SK-N-SH (cell line): ENCODE measurements at regions of chr14 and their contacts with region 1.

Region 1: GRCh38 chr14:81170104-81170828 is 50.5 kb downstream of the GTF2A1 start:
- DNase-seq: peak; percentile 83
- H3K4me3 ChIP-seq: peak overlapping the region; percentile 79 to 84
- H3K27ac ChIP-seq: peak overlapping the region; percentile 94 to 99
- H3K4me1 ChIP-seq: peaks cover 3 to 5% of the 10 kb centered on the region in 2 experiments; a peak in 2 of 4 replicates
- H3K27me3 ChIP-seq: no peaks in the 10 kb centered on the region
- CTCF ChIP-seq: peak; percentile 88
- EP300 ChIP-seq: no peak; a peak in 1 of 4 replicates
- RAD21 ChIP-seq: peak; percentile 73

Region 2: DNA sequence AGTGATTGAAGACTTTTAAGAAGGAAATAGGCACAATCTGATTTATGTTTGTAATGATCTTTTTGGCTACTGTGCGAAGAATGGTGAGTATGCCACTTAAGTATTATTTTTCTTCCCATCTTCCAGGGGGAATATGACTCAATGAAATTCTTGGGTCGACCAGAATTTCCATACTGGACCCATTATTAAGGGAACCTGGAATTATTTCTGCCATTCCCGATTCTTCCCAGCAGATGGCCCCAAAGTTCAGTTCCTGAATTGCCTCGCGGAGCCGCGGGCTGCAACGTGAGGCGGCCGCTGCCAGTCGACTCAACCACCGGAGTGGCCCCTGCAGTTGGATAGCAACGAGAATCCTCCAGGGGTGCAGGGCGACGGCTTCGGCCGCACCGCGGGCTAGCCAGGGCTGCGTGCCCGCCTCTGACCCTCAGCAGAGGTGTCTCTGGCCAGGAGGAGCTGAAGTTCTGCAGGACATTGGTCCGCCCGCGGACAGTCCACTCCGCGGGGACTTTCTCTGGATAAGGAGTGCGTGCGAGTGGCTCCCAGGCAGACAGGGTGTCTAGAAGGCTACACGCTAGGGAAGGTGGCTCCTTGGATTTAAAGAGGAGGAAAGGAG is 215.5 kb before region 1 on chr14:
- CTCF ChIA-PET with region 1: interaction called, 14 read pairs
- POLR2A ChIA-PET with region 1: no interaction called
- DNase-seq: peak; percentile 81
- H3K4me3 ChIP-seq: peak overlapping the region; percentile 54 to 70
- H3K27ac ChIP-seq: no peak overlapping the region
- H3K4me1 ChIP-seq: peaks cover 0 to 2% of the 10 kb centered on the region in 2 experiments; a peak in 1 of 4 replicates
- H3K27me3 ChIP-seq: peaks cover 25% of the 10 kb centered on the region
- CTCF ChIP-seq: peak; percentile 77
- EP300 ChIP-seq: peak in 1 of 2 experiments; percentile 34; a peak in 1 of 4 replicates
- RAD21 ChIP-seq: peak; percentile 85

Region 3: DNA sequence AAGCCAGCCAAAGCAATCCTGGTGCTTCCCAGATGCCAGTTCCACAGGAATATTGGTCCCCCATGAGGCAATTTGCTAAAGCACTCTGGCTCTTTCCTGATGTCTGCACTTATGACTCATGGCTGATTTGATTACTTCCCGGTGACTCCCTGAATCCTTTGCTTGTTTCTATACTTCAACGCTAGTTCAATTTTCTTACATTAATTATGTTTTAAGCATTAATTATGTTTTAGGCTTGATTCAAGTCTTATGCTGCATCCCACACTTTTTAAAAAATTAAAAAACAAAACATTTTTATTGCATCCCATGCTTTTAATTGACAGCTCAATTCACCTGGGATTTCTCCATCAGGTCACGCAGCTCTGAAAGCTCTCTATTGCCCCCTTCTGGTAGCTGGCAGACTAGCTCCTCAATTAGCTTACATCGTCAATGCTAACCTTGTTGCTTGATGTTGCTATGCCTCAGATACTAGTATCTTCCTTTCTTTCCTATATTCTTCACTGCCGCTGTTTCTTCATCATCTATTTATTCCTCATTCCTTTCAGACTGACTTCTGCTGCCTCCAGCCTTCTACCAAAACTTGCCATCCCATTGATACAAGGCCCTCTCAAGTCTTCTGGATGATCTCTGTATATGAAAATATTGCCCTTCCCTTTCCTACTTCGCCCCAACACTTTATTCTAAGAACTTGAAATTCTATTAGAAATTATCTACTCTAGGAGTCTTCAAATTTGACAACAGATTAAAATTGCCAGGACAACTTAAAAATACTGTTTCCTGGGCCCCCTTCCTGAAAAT is 182.8 kb before region 1 on chr14:
- CTCF ChIA-PET with region 1: interaction called, 14 read pairs
- POLR2A ChIA-PET with region 1: no interaction called
- DNase-seq: peak; percentile 69
- H3K4me3 ChIP-seq: peak overlapping the region in 1 of 2 experiments; percentile 42; a peak in 1 of 4 replicates
- H3K27ac ChIP-seq: no peak overlapping the region
- H3K4me1 ChIP-seq: no peaks in the 10 kb centered on the region; a peak in 1 of 4 replicates
- H3K27me3 ChIP-seq: peaks cover 13% of the 10 kb centered on the region; the same call in 1 of the 2 replicates
- CTCF ChIP-seq: peak; percentile 97
- EP300 ChIP-seq: no peak
- RAD21 ChIP-seq: peak; percentile 85

Region 4: GRCh38 chr14:80996049-80996901 is 174.0 kb before region 1 on chr14:
- CTCF ChIA-PET with region 1: interaction called, 29 read pairs
- POLR2A ChIA-PET with region 1: interaction called, 5 read pairs
- DNase-seq: peak; percentile 50
- H3K4me3 ChIP-seq: peak overlapping the region in 1 of 2 experiments; percentile 36; a peak in 1 of 4 replicates
- H3K27ac ChIP-seq: no peak overlapping the region
- H3K4me1 ChIP-seq: no peaks in the 10 kb centered on the region
- H3K27me3 ChIP-seq: peaks cover 8% of the 10 kb centered on the region; the same call in 1 of the 2 replicates
- CTCF ChIP-seq: peak; percentile 80
- EP300 ChIP-seq: no peak
- RAD21 ChIP-seq: peak; percentile 65

Region 5: GRCh38 chr14:81147140-81147897 is 22.9 kb before region 1 on chr14:
- CTCF ChIA-PET with region 1: interaction called, 11 read pairs
- POLR2A ChIA-PET with region 1: no interaction called
- DNase-seq: no peak
- H3K4me3 ChIP-seq: no peak overlapping the region
- H3K27ac ChIP-seq: no peak overlapping the region
- H3K4me1 ChIP-seq: no peaks in the 10 kb centered on the region
- H3K27me3 ChIP-seq: no peaks in the 10 kb centered on the region
- CTCF ChIP-seq: no peak
- EP300 ChIP-seq: no peak
- RAD21 ChIP-seq: no peak

Region 6: DNA sequence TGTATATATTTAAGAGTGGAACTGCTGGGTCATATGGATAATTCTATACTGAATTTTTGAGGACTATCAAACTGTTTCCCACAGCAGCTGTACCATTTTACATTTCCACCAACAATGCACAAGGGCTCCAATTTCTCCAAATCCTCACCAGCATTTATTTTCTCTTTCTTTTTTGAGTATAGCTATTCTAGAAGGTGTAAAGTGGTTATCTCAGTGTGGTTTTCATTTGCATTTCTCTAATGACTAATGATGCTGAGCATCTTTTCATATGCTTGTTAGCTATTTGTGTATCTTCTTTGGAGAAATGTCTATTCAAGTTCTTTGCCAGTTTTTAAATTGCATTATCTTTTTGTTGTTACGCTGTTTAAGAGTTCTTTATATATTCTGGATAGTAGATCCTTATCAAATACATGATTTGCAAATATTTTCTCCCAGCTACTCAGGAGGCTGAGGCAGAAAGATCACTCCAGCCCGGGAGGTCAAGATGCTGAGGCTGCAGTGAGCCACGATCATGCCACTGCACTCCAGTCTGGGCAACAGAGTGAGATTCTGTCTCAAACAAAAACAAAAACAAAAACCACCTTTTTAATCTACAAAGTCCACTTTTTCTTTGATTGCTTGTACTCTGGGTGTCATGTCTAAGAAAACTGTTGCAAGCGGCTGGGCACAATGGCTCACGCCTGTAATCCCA is 17.7 kb after region 1 on chr14:
- CTCF ChIA-PET with region 1: interaction called, 16 read pairs
- POLR2A ChIA-PET with region 1: interaction called, 3 read pairs
- DNase-seq: no peak
- H3K4me3 ChIP-seq: no peak overlapping the region
- H3K27ac ChIP-seq: no peak overlapping the region
- H3K4me1 ChIP-seq: no peaks in the 10 kb centered on the region
- H3K27me3 ChIP-seq: no peaks in the 10 kb centered on the region
- CTCF ChIP-seq: no peak
- EP300 ChIP-seq: no peak
- RAD21 ChIP-seq: no peak

Region 7: GRCh38 chr14:81211844-81212243 is 41.6 kb after region 1 on chr14:
- CTCF ChIA-PET with region 1: interaction called, 19 read pairs
- POLR2A ChIA-PET with region 1: no interaction called
- DNase-seq: peak; percentile 22
- H3K4me3 ChIP-seq: no peak overlapping the region
- H3K27ac ChIP-seq: no peak overlapping the region
- H3K4me1 ChIP-seq: no peaks in the 10 kb centered on the region
- H3K27me3 ChIP-seq: no peaks in the 10 kb centered on the region
- CTCF ChIP-seq: peak; percentile 51
- EP300 ChIP-seq: no peak
- RAD21 ChIP-seq: peak; percentile 65